Activated CD4-positive, alpha-beta T cell treated with anti-CD3 and anti-CD28 coated beads for 36 hours (primary cell): ENCODE measurements at regions of chr2 and their contacts with region 1.

Region 1: GRCh38 chr2:109128048-109128465 is 948 bp upstream of the SH3RF3 start:
- DNase-seq: peak; percentile 83
- ATAC-seq: peak; percentile 60
- H3K4me3 Mint-ChIP-seq: peak overlapping the region; percentile 76
- H3K27ac Mint-ChIP-seq: no peak overlapping the region
- H3K4me1 Mint-ChIP-seq: peaks cover 31% of the 10 kb centered on the region
- H3K27me3 Mint-ChIP-seq: peaks cover 18% of the 10 kb centered on the region

Region 2: GRCh38 chr2:108982259-108982691 is 145.8 kb before region 1 on chr2:
- CTCF ChIA-PET with region 1: no interaction called
- POLR2A ChIA-PET with region 1: no interaction called
- intact Hi-C with region 1: no loop called
- DNase-seq: no peak
- ATAC-seq: peak; percentile 8
- H3K4me3 Mint-ChIP-seq: no peak overlapping the region
- H3K27ac Mint-ChIP-seq: no peak overlapping the region
- H3K4me1 Mint-ChIP-seq: peaks cover 68% of the 10 kb centered on the region
- H3K27me3 Mint-ChIP-seq: no peaks in the 10 kb centered on the region

Region 3: DNA sequence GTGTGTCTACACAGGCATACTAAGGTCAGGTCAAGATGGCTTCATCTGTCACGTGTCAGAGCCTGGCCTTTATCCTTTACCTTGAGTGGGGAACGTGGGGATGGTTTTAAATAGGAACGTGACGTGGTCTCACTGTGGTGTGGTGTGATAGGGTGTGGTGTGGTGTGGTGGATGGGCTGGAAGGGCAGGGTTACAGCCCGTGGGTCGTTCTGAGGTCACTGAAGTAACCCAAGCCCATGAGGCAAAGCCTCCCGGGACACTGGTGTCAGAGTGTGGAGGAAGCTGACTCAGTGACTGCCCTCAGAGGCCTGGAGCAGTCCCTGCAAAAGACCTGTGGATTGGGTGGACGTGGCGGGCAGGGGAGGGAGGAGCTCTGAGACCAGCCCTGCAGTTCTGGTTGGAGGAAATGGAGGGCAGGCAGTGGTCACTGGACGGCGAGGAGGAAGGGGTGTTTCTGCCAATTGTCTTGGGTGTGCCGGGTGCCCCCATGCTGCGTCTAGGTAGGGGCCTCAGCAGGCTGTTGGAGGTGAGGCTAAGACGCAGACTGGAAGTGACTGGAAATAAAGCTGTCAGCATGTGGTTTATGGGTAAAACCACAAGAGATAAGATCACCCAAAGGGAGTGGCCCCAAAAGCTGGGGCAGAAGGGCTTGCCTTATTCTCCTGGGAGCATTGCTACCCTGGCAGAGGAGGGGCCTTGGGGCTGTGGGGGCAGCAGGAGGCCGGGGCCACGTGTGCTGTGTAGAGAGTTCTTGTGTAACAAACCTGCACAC is 85.8 kb after region 1 on chr2:
- CTCF ChIA-PET with region 1: interaction called, 3 read pairs
- POLR2A ChIA-PET with region 1: interaction called, 3 read pairs
- intact Hi-C with region 1: loop called (anchors 2 to 5 kb)
- DNase-seq: peak; percentile 73
- ATAC-seq: peak; percentile 71
- H3K4me3 Mint-ChIP-seq: peak overlapping the region; percentile 38
- H3K27ac Mint-ChIP-seq: peak overlapping the region; percentile 87
- H3K4me1 Mint-ChIP-seq: peaks cover 78% of the 10 kb centered on the region
- H3K27me3 Mint-ChIP-seq: peaks cover 65% of the 10 kb centered on the region

Region 4: DNA sequence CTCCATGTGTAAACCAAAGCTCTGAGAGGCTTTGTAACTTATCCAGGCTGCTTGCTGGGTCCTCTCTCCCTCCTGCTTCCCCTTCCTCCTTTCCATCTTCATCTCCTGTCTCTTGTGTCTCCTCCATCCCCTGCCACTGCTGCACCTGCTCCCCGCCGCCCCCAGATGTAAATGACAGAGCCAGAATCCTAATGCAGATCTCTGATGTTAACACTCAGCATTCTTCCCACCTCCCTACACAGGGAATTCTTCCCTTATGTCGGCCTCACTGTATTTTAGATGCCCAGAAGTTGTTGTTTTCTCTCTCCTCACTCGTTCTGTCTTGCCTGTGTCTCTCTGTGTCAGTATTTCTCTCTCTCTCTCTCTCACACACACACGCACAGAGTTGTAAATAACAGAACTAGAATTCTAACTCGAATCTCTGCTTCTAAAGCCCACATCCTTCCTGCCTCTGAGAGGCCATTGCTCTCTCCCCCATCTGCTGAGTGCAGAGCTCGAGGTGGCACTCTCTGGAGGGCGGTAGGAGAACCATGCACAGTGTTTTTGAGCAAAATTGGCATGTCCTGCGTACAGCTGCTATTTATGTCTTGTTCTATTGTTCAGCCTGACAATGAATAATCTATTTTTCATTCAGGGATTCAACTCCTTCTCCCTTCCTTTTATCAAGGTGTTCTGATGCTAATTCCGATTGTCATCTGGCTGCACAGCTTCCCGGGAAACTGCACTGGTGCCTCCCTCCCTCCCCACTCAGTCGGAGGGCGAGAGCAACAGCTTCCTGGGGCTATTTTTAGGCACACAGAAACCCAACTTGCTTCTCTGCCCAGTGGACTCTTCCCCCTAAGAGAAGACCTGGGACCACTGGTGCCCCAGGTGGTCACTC is 220.9 kb after region 1 on chr2:
- CTCF ChIA-PET with region 1: interaction called, 3 read pairs
- POLR2A ChIA-PET with region 1: no interaction called
- intact Hi-C with region 1: loop called (anchors 5 kb)
- DNase-seq: peak; percentile 61
- ATAC-seq: peak; percentile 89
- H3K4me3 Mint-ChIP-seq: peak overlapping the region; percentile 4
- H3K27ac Mint-ChIP-seq: peak overlapping the region; percentile 74
- H3K4me1 Mint-ChIP-seq: peaks cover 48% of the 10 kb centered on the region
- H3K27me3 Mint-ChIP-seq: no peaks in the 10 kb centered on the region

Region 5: DNA sequence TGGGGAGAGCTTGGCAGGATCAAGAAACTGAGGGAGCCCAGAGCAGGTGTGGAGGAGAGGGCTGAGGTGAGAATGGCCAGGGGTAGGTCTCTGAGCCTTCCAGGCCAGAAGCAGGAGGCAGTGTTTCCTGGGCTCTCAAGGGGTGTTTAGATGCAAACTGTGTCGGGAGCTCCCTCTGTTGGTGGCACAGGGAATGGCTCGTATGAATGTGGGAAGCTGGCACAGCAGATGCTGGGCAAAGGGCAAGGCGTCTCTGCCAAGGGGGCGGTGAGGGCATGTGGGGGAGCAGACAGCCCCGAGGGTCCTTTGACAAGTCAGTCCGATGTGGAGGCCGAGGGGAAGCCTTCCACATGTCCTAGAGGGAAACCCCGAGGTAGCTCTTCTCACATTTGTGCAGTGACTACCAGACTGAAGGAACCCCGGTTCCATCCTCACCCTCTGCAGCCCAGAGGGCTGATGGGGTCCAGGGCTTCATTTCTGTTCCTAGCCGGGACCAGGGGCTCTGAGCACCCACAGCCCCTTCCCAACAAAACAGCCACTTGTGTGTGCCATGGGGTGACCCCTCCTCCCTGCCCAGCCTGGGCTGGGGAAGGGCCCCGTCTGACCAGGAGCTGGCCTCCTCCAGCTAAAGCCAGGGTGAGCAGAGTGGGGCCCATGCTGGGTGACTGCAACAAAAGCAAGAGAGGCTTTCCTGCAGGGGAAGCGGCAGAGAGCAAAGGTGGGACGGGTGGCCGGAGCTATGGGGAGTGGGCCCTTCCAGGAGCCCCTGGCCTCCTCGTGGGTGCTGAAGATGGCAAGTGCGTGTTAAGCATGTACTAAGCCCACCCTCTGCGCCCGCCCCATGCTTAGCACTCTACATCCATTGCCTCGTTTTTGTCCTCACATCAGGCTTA is 382.3 kb after region 1 on chr2:
- CTCF ChIA-PET with region 1: interaction called, 13 read pairs
- POLR2A ChIA-PET with region 1: no interaction called
- intact Hi-C with region 1: loop called (anchors 1 kb)
- DNase-seq: peak; percentile 86
- ATAC-seq: peak; percentile 79
- H3K4me3 Mint-ChIP-seq: no peak overlapping the region
- H3K27ac Mint-ChIP-seq: no peak overlapping the region
- H3K4me1 Mint-ChIP-seq: no peaks in the 10 kb centered on the region
- H3K27me3 Mint-ChIP-seq: no peaks in the 10 kb centered on the region